ENCODE measurements at regions of chr7 and their contacts with region 1.

Region 1: DNA sequence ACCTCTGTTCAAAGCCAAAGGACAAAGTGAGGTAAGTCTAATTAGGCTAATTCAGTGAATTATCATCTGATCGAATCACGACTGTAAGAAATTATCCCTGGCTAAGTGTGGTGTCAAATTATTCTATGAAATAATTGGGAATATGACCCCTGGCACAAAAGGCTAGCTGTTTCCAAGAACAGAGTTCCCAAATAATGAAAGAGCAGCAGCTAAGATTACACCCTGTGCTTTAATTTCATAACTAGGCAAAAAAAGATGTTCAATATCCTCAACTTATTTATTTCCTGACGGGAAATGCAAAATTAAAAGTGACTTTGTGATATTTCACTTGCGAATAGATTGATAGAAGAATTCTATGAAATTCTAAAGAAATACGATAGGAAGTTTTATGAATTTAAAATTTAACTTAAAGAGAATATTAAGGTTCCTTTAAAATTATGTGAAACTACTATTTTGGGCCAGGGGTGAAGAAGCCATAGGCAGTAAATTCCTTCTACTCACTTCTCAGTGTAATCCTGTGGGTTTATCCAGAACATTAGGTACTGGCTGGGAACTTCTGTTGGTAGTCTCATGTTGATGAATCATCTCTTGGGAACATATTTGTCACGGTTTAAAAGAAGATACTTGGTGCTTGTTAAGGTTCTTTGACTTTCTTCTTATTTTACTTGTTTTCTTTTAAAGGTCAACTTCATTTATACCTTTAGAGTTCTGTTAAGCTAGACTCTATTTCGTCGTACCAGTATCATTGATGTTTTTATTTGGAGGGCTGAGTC is 148.5 kb downstream of the POLR1F start:
- DNase-seq: peak; percentile 91
- H3K4me3 Mint-ChIP-seq: peak overlapping the region; percentile 70
- H3K27ac Mint-ChIP-seq: peak overlapping the region; percentile 98
- H3K4me1 Mint-ChIP-seq: peaks cover 44% of the 10 kb centered on the region
- H3K27me3 Mint-ChIP-seq: no peaks in the 10 kb centered on the region
- CTCF ChIP-seq: no peak

Region 2: DNA sequence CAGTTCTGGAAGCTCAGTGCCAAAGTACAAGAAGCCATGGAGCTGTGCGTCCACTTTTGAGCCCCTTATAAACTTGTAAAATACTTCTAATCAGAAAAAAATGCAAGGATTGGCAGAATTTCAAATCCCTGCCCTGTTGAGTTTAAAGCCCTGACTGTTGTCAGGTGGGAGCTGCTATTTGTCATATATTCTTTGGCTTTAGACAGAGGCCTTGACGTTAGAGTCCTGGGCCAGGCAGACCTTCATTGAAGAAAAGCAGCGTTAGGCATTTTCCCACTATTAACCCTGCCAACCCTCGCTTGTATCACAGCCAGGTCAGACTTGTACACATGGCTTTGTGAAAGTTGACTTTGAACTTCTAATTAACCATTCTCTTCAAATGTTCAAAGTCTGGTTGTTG is 598.3 kb before region 1 on chr7:
- CTCF ChIA-PET with region 1: no interaction called
- POLR2A ChIA-PET with region 1: no interaction called
- intact Hi-C with region 1: no loop called
- DNase-seq: no peak
- H3K4me3 Mint-ChIP-seq: no peak overlapping the region
- H3K27ac Mint-ChIP-seq: no peak overlapping the region
- H3K4me1 Mint-ChIP-seq: no peaks in the 10 kb centered on the region
- H3K27me3 Mint-ChIP-seq: no peaks in the 10 kb centered on the region
- CTCF ChIP-seq: no peak

Region 3: DNA sequence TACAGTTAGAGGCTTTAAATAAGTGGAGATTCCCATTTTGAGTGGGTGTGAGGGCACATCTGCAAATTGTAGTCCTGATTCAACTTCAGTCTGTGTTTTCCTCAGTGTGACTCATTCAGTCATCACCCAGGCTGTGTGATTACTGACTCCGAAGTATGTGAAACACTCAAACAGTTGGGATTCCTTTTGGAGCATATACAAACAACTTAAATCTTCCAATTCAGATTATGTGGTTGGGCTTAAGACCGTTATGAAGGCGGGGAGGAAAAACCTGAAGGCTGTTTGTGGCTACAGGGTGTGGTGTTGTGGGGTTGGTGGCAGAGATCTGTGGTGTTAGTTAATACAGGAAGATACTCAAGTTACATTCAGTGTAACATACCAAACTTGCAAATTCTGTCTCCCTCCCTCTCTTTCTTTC is 155.4 kb before region 1 on chr7:
- CTCF ChIA-PET with region 1: interaction called, 3 read pairs
- POLR2A ChIA-PET with region 1: no interaction called
- intact Hi-C with region 1: loop called (anchors 5 kb)
- DNase-seq: peak; percentile 93
- H3K4me3 Mint-ChIP-seq: peak overlapping the region; percentile 53
- H3K27ac Mint-ChIP-seq: peak overlapping the region; percentile 89
- H3K4me1 Mint-ChIP-seq: peaks cover 14% of the 10 kb centered on the region
- H3K27me3 Mint-ChIP-seq: no peaks in the 10 kb centered on the region
- CTCF ChIP-seq: no peak

Region 4: DNA sequence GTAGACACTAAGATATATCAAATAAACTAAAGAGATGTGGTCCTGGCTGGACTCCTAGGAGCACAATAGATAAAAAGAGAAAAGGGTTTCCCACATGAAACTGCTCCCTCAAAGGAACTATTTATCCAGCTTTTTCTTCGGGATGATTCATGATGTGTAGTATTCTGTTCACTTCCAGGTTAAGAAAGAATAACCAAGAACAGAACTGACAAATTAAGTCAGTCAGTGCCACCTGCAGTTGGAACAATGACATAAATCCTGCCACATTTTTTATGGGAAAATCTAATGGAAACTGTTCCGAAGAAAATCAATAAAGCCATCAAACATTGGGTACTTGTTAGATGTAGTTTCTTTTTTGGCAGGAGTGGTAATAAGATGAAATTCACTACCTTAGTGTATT is 61.4 kb after region 1 on chr7:
- CTCF ChIA-PET with region 1: interaction called, 5 read pairs
- POLR2A ChIA-PET with region 1: interaction called, 26 read pairs
- intact Hi-C with region 1: loop called (anchors 5 kb)
- DNase-seq: peak; percentile 67
- H3K4me3 Mint-ChIP-seq: no peak overlapping the region
- H3K27ac Mint-ChIP-seq: peak overlapping the region; percentile 89
- H3K4me1 Mint-ChIP-seq: peaks cover 33% of the 10 kb centered on the region
- H3K27me3 Mint-ChIP-seq: no peaks in the 10 kb centered on the region
- CTCF ChIP-seq: peak; percentile 34